ENCODE measurements at regions of chr1 and their contacts with region 1.

Region 1: GRCh38 chr1:87953732-87954344 is 625.2 kb downstream of the LMO4 start:
- DNase-seq: peak; percentile 39
- H3K4me3 ChIP-seq: no peak overlapping the region
- H3K27ac ChIP-seq: no peak overlapping the region
- H3K27me3 ChIP-seq: no peaks in the 10 kb centered on the region
- CTCF ChIP-seq: peak; percentile 87

Region 2: DNA sequence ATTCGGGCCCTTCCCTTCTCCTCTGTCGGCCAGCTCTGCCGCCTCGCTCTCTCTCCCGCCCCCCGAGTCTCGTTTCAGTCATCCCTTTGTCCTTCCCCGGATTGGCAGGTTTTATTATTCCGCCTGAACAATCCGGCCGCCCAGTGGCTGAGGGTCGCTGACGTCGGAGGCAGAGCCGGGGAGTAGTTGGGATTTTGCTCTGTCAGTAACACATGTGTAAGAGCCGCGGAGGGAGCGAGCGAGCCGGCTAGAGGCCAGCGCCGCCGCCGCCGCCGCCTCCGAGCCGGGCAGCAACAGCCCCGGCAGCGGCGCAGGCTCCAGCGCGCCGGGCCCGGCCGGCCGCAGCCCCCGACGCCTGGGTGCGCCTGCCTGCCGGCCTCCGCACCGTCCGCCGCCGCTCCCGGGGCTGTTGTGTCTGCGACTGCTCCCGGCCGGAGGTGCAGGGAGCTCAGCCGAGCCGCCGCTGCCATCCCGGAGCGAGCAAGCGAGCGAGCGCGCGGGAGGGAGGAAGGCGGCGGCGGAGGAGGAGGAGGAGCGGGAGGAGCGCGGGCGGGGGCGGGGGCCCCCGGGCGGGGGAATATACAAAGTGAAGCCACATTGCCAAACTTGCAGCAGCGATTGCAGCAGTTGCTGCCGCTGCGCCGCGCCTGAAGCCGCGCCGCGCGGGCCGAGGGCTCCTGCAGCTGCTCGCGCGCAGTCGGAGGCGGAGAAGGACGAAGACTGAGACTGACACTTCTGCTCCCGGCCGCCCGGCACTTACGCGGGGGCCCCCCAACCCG is 625.4 kb before region 1 on chr1 and contains the start of gene LMO4:
- CTCF ChIA-PET with region 1: interaction called, 27 read pairs
- POLR2A ChIA-PET with region 1: no interaction called
- DNase-seq: peak; percentile 95
- H3K4me3 ChIP-seq: peak within 1 kb of the TSS; percentile 85
- H3K27ac ChIP-seq: peak within 1 kb of the TSS; percentile 98
- H3K27me3 ChIP-seq: no peaks in the 10 kb centered on the region
- CTCF ChIP-seq: no peak
- polyA plus RNA-seq, gene LMO4: 115 and 138 TPM in 2 replicates

Region 3: DNA sequence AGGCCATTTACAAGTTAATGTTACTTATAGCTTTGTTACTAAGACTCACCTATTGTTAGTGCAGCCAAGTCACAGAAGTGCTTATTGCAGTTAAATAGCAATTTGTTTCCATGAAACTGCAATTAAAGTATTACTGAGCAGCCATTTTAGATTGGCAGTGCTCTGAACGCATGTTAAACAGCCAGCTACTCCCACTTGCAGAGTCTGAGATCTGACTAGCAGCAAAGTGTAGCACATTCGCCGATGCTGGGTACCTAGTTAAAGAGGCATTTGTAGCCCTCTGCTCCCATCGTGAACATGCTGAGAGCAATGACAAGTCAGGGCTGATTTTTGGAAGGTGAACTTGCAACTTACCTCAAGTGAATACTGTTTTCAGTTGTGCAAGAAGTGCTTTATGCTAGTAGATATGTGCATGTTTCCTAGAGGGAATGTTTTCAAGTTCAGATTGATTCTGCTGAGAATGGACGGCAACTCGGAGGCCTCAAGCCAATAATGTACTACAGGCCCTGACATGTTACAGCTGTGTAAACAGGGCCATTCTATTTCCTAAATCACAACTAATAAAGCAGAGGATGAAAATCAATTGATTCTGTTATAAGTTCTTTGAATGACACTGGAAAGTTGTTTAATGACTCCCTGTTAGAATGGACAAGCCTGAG is 605.4 kb before region 1 on chr1:
- CTCF ChIA-PET with region 1: interaction called, 17 read pairs
- POLR2A ChIA-PET with region 1: no interaction called
- DNase-seq: no peak
- H3K4me3 ChIP-seq: no peak overlapping the region
- H3K27ac ChIP-seq: no peak overlapping the region
- H3K27me3 ChIP-seq: no peaks in the 10 kb centered on the region
- CTCF ChIP-seq: no peak

Region 4: DNA sequence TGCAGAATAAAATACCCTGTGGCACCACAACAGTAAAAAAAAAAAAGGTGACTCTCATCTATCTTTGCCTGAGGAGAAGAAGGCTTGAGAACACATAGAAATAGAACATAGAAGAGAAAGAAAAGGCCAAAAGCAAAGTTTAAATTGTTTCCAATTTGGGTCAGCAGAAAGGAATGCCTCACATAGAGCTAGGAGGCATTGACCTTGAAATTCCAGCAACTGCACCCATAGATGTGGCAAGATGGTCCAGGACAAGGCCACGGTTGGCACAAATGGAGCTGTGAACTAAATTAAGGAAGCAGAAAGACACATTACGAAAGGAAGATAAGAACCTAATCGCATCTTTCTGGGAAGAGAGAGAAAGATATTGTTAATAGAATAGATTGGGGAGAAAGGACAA is 36.9 kb before region 1 on chr1:
- CTCF ChIA-PET with region 1: interaction called, 17 read pairs
- POLR2A ChIA-PET with region 1: no interaction called
- DNase-seq: no peak
- H3K4me3 ChIP-seq: no peak overlapping the region
- H3K27ac ChIP-seq: no peak overlapping the region
- H3K27me3 ChIP-seq: no peaks in the 10 kb centered on the region
- CTCF ChIP-seq: no peak

Region 5: DNA sequence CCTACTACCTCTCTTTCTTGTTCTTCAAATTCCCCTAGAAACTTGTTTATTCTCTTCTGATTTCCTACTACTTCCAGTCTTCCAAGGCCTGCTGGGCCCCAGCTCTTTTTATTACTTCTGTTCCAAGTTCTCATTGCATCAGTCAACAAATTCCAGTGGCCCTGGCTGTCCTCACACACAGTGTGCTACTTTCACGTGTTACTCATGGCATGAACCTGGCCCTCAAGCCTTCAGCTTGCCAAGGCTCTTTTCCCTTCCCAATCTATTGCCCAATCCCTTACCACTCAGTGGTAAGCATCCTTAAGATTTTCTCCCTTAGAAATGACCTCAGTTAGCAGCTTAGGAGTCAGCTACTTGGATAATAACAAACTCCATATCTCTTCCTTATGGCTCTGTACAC is 11.7 kb before region 1 on chr1:
- CTCF ChIA-PET with region 1: interaction called, 33 read pairs
- POLR2A ChIA-PET with region 1: no interaction called
- DNase-seq: no peak
- H3K4me3 ChIP-seq: no peak overlapping the region
- H3K27ac ChIP-seq: no peak overlapping the region
- H3K27me3 ChIP-seq: no peaks in the 10 kb centered on the region
- CTCF ChIP-seq: no peak

Measured in AG04450 (cell line).